Activated CD4-positive, alpha-beta memory T cell treated with anti-CD3 and anti-CD28 coated beads for 36 hours (primary cell): ENCODE measurements at regions of chr14 and their contacts with region 1.

Region 1: DNA sequence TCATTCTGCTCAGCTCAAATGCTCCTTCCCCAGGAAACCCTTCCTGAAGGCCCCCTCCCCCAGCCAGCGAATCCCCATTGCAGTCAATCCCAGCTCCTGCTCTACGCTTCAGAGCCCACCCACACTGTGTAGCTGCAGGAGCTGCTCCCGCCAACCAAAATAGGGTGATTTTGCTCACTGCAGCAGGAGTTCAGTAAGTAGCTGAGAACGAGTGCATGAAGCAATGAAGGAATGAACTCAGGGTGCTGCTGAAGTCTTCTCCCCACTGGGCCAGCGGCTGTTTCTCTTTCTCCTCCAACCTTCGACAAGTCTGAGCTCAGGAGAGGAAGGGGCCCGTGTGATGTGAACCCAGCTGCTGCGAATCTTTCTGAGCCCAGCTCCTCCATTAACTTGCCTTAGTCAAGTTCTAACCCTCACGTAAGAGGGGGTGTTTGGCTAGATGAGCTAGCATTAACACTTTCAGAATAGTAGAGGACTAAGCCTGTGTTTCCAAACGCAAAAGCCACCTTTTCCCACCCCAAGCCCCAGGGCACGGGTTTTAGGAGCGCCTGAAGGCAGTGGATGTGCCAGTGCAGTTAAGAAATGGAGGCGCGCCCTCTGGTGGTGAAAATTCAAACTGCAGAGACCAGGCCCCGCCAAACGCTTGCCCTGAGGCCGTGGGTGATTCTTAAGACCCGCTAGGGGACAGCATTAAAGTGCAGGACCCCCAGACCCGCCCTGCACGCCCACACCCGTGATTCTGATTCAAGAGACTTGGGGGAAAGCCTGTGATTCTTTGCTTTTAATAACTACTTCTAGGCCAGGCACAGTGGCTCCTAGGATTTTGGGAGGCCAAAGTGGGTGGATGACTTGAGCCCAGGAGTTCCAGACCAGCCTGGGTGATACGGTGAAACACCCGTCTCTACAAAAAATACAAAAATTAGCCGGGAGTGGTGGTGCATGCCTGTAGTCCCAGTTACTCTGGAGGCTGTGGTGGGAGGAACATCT is 11.9 kb upstream of the SERPINA4 start:
- DNase-seq: peak; percentile 74
- H3K4me3 Mint-ChIP-seq: no peak overlapping the region
- H3K27ac Mint-ChIP-seq: no peak overlapping the region
- H3K4me1 Mint-ChIP-seq: no peaks in the 10 kb centered on the region
- H3K27me3 Mint-ChIP-seq: peaks cover 18% of the 10 kb centered on the region

Region 2: DNA sequence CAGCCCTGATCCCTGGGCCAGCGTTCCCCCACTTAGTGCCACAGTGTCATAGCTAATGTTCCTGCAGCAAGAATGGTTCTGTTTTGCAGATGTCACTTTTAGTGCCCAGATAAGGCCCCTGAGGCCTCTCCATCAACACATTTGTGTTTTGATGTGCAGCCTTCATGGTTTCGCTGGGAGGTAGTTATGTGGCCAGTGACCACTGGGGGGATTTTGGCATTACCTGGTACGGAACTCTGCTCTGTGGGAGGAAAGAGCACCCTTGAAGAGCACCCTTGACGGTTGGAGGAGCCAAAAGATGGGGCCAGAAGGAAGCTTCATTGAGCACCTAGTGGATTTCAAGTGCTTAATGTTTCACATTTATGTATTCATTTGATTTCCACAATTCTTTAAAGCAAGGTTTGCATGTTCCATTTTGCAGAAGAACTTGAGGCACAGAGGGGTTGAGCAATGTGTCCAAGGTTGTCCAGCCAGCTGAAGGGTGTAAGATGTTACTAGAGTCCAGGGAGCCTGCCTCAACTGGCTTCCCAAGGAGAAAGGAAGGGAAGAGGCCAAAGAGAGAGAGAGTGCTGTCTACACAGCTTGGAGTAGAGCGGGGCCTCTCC is 109.7 kb before region 1 on chr14:
- CTCF ChIA-PET with region 1: interaction called, 26 read pairs
- POLR2A ChIA-PET with region 1: no interaction called
- intact Hi-C with region 1: loop called (anchors 5 kb)
- DNase-seq: no peak
- H3K4me3 Mint-ChIP-seq: no peak overlapping the region
- H3K27ac Mint-ChIP-seq: no peak overlapping the region
- H3K4me1 Mint-ChIP-seq: no peaks in the 10 kb centered on the region
- H3K27me3 Mint-ChIP-seq: peaks cover 9% of the 10 kb centered on the region

Region 3: DNA sequence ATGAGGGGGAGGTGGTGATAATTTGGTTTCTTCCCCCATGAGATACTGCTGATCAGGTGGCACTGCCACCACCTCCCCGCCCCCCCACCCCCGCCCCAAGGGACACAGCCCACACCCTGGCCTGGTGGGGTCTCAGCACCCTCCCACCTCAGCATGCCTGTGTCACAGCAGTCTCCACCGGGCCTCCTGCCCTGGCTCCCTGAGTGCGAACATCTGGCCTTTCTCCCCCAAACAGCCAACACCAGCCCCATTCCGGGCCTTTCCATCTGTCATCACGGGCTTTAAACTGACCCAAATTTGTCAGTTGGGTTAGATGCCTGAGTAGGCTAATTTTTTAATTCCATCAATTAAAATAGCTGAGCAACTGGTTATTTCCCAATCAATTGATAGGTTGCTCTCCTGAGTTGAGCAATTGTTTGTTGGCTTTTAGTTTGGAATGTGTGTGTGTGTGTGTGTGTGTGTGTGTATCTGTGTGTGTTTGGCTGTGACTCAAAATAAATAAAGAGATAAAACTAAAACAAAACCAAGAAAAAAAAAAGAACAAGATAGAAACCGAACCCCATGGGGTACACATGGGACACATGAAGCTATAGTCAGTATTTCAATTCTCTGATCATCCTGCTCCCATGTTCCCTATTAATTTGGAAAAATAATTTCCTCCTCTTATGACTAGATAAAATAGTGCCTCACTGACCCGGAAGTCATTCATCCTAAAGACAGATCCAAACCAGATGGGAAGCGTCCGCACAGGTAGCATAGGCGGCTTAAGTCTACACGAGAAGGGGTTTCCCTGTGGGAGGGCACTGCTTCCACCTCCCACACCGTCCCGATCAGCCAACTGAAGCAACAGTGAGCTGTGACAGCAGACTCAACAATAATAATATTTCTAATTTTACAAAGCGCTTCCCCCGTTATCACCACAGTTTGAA is 47.4 kb before region 1 on chr14:
- CTCF ChIA-PET with region 1: no interaction called
- POLR2A ChIA-PET with region 1: no interaction called
- intact Hi-C with region 1: no loop called
- DNase-seq: no peak
- H3K4me3 Mint-ChIP-seq: no peak overlapping the region
- H3K27ac Mint-ChIP-seq: no peak overlapping the region
- H3K4me1 Mint-ChIP-seq: no peaks in the 10 kb centered on the region
- H3K27me3 Mint-ChIP-seq: peaks cover 8% of the 10 kb centered on the region

Region 4: DNA sequence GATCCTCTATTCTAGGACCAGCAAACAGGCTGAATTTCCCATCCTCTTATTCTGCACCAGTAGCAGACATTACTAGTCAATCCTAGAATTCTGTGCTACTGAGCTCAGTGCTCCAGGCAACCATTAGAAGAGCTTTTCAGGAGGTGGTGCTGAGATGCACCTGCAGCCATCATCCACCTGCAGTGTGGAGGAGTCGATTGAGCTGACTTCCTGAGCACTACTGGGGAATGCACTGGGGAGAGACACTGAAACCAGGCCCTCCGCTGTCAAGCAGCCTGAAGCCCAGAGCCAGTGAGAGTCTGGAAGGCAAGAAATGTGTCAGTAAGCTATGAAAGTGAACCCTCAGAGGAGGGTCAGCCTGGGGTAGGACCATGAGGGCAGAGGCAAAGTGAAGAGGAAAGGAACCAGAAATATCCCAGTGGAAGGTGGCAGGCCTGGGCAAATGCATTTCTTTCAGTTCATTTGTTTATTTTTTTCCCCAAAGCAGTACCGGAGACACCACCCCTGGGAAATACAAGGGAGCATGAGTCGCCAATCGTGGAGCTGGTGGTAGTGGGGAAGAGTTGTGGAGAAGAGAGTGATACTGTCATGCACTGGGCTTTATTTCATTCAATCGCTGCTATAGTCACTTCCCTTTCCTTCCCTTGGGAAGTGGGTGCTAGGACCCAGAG is 11.1 kb before region 1 on chr14:
- CTCF ChIA-PET with region 1: interaction called, 11 read pairs
- POLR2A ChIA-PET with region 1: no interaction called
- intact Hi-C with region 1: no loop called
- DNase-seq: no peak
- H3K4me3 Mint-ChIP-seq: no peak overlapping the region
- H3K27ac Mint-ChIP-seq: no peak overlapping the region
- H3K4me1 Mint-ChIP-seq: no peaks in the 10 kb centered on the region
- H3K27me3 Mint-ChIP-seq: peaks cover 22% of the 10 kb centered on the region

Region 5: DNA sequence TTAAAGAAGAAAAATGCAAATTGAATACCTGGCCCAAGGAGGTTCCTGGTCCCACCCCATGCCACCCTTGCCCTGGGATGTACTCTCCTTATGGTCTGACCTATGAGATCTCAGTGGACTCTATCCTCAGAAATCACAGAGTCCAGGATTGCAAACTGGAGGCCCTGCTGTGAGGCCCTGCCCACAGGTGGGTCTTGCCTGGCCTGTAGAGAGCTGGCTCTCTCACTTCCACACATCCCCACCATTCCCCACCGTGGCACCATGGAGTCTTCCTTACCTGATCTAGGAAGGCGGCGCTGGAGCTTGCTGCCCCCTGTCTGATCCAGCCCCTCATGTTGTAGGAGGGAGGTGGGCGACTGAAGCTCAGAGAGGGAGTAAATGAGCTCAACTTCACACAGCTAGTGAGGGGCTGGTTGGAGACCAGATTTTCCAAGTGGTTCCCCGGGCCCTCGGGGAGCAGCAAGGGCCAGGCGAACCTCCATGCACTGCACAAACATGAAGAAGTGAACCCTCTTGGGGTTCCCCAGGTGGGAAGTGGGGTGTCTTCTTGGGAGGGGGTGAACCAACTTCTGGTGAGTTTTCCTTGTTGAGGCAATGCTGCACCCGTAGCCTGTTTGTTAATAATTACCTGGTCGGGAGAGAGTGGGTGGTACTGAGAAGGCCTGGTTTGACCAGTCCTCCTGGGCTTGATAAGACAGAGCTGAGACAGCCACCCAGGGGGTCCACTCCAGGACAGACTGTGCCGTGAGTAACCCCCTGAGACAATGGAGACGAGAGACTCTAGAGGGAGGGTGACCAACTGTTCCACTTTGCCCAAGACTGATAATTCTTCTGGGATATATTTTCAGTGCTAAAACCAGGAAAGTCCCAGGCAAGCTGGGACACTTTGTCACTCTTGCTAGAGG is 11.7 kb after region 1 on chr14 and contains the start of gene SERPINA4:
- CTCF ChIA-PET with region 1: interaction called, 14 read pairs
- POLR2A ChIA-PET with region 1: no interaction called
- intact Hi-C with region 1: no loop called
- DNase-seq: no peak
- H3K4me3 Mint-ChIP-seq: no peak within 1 kb of the TSS
- H3K27ac Mint-ChIP-seq: no peak within 1 kb of the TSS
- H3K4me1 Mint-ChIP-seq: no peaks in the 10 kb centered on the region
- H3K27me3 Mint-ChIP-seq: peaks cover 8% of the 10 kb centered on the region
- total RNA-seq, gene SERPINA4: not detected